Endothelial cell of umbilical vein (primary cell): ENCODE measurements at regions of chrX and their contacts with region 1.

Region 1: GRCh38 chrX:37349221-37350064 is at the start of gene PRRG1:
- DNase-seq: peak; percentile 77
- H3K4me3 ChIP-seq: peak within 1 kb of the TSS; percentile 64 to 98 (median 68)
- H3K27ac ChIP-seq: peak within 1 kb of the TSS; percentile 89
- H3K4me1 ChIP-seq: peaks cover 6% of the 10 kb centered on the region
- H3K27me3 ChIP-seq: no peaks in the 10 kb centered on the region
- CTCF ChIP-seq: no peak
- POLR2A ChIP-seq: peak; percentile 80
- total RNA-seq, gene PRRG1: 28.3 and 37.6 TPM in 2 replicates

Region 2: DNA sequence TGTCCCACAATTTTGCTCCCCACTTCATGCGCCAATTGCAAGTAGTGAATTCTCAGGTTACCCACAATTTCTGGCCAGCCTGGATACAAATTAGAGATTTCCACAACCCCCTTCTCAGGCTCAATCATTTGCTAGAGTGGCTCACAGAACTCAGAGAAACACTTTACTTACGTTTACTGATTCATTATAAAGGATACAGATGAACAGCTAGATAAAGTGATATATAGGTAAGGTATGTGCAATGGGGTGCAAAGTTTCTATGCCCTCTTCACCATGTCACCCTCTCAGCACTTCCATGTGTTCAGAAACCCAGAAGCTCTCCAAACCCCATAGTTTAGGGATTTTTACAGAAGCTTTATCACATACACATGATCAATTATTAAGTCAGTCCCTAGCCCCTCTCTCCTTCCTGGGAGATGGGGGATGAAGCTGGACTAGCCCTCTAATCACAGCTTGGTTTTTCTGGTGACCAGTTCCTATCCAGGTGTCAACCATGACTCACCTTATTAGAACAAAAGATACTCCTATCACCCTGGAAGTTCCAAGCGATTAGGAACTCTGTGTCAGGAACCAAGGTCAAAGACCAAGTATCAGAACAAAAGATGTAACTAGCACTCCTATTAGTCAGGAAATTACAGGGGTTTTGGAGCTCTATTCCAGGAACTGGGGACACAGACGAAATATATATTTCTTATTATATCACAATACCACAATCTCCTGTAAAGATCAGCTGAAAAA is 33.8 kb before region 1 on chrX:
- CTCF ChIA-PET with region 1: no interaction called
- POLR2A ChIA-PET with region 1: interaction called, 3 read pairs
- dilution Hi-C with region 1: no loop called
- intact Hi-C with region 1: loop called (anchors 1 kb)
- DNase-seq: peak; percentile 37
- H3K4me3 ChIP-seq: no peak overlapping the region
- H3K27ac ChIP-seq: peak overlapping the region; percentile 86
- H3K4me1 ChIP-seq: peaks cover 31% of the 10 kb centered on the region
- H3K27me3 ChIP-seq: no peaks in the 10 kb centered on the region
- CTCF ChIP-seq: no peak
- POLR2A ChIP-seq: no peak

Region 3: GRCh38 chrX:37380920-37381319 is 31.5 kb after region 1 on chrX:
- CTCF ChIA-PET with region 1: no interaction called
- POLR2A ChIA-PET with region 1: interaction called, 3 read pairs
- dilution Hi-C with region 1: no loop called
- intact Hi-C with region 1: loop called (anchors 2 kb)
- DNase-seq: peak; percentile 91
- H3K4me3 ChIP-seq: no peak overlapping the region
- H3K27ac ChIP-seq: peak overlapping the region; percentile 53
- H3K4me1 ChIP-seq: peaks cover 37% of the 10 kb centered on the region
- H3K27me3 ChIP-seq: no peaks in the 10 kb centered on the region
- CTCF ChIP-seq: no peak
- POLR2A ChIP-seq: peak; percentile 26

Region 4: DNA sequence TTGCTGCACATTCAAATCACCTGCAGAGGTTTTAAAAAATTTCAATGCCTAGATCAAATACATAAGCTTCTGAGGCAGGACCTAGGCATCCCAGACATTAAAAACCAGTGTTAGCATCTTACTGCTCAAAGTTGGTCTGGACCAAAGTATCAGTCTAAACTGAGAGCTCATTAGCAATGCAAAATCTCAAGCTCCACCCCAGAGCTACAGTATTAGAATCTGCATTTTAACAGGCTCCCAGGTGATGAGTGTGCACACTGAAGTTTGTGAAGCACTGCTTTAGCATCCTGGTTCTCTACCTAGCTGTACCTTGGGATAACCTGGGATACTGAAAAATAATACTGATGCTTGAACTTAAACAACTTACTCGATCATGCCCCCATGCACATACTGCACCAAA is 95.7 kb after region 1 on chrX:
- CTCF ChIA-PET with region 1: no interaction called
- POLR2A ChIA-PET with region 1: no interaction called
- dilution Hi-C with region 1: no loop called
- intact Hi-C with region 1: no loop called
- DNase-seq: no peak
- H3K4me3 ChIP-seq: no peak overlapping the region
- H3K27ac ChIP-seq: no peak overlapping the region
- H3K4me1 ChIP-seq: no peaks in the 10 kb centered on the region
- H3K27me3 ChIP-seq: no peaks in the 10 kb centered on the region
- CTCF ChIP-seq: no peak
- POLR2A ChIP-seq: no peak

Region 5: DNA sequence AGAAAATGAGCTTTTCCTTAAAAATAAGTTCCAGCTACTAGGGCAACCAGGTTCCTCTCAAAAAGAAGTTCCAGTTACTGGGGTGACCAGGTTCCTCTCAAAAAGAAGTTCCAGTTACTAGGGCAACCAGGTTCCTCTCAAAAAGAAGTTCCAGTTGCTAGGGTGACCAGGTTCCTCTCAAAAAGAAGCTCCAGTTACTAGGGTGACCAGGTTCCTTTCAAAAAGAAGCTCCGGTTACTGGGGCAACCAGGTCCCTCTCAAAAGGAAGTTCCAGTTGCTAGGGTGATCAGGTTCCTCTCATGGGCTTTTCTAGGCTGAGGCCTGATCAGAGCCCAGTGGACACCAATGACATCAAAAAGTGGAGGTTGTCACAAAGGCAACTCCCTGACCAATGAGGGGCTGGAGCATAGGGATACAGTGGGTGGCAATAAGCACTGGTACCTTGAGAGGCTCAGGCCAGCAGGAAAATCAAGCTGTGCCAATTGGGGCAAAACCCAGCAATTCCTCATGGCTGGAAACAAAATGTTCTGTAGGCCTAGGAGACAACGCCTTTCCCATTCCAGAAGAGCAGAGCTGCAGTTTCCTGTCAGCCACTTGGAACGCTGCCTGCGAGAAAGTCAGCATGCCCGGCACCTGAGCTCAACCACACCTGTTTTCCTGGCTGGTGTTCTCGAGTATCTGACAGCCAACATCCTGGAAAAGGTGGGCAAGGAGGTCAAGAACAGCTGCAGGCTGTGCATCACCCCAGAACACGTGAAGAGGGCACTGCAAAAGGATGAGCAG is 644.6 kb after region 1 on chrX:
- CTCF ChIA-PET with region 1: no interaction called
- POLR2A ChIA-PET with region 1: no interaction called
- dilution Hi-C with region 1: no loop called
- intact Hi-C with region 1: loop called (anchors 5 kb)
- DNase-seq: no peak
- H3K4me3 ChIP-seq: no peak overlapping the region
- H3K27ac ChIP-seq: no peak overlapping the region
- H3K4me1 ChIP-seq: no peaks in the 10 kb centered on the region
- H3K27me3 ChIP-seq: no peaks in the 10 kb centered on the region
- CTCF ChIP-seq: no peak
- POLR2A ChIP-seq: no peak